ENCODE measurements at regions of chr3 and their contacts with region 1.

Region 1: GRCh38 chr3:25365636-25366035 is 62.4 kb upstream of the RARB start:
- DNase-seq: no peak

Region 2: DNA sequence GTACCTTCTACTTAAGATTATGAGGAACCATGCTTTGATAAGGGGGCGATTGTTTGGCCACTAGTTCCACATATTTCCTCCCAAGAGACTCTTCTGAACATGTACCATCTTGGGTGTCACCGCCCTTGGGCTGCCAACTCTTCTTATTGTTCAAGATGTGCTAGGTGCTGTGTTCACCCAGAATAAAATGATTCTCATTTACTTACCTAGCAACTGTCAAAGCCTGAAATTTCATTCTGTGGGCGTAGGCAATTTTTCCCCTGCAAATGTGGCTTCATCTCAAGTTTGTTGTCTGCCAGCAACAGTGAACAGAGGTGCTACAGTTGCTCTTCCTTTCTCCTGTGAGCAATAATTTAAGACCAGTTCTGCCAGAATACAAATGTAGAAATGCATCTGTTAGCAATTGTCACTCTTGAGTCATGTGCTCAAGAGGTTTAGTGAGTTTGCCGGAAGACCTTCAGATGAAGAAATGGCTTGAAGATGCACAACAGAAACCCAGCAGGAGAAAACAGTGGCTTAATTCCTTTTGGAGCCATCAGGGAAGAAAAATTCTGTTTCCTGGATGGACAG is 21.1 kb after region 1 on chr3:
- intact Hi-C with region 1: loop called in 1 of 2 experiments (anchors 1 kb)
- DNase-seq: no peak

Region 3: DNA sequence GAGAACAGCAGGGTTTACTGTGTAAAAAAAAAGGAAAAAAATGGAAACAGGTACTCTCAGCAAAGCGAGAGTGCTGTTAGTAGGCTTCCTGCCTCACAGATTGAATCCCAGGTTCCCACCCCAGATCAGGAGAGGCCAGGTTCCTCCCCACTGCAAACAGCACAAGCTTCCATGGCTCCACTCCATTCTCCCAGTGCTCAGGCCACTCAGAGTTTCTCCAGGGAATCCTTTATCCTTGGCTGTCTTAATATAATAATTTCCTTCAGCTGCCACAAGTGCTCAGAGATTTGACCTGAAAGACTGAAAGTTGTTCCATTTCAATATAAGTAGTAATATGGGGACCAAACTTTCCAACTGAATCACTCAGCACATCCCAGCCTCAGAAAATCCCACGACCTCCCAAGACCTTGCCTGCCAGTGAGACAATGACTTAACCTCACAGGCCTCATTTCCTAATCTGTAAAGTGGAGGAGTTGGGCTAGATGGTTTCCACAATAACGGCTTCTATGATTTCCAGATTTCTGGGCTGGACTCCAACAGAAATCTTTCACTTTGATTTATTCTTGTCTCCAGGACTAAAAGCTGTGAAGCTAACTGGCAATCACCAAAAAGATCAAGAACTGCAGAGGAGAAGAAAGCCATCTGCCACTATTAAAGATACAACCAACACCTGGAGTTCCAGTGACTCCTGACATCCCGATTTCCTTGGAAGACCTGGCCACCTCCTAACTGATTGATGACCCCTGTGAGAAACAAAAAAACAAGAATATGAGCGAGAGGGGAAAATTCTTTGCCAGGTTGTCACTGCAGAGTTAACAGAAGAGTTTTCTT is 1714.0 kb after region 1 on chr3:
- intact Hi-C with region 1: no loop called
- DNase-seq: no peak

Measured in posterior vena cava (tissue), 2 donors.